GM12878 (cell line): ENCODE measurements at regions of chr1 and their contacts with region 1.

Region 1: DNA sequence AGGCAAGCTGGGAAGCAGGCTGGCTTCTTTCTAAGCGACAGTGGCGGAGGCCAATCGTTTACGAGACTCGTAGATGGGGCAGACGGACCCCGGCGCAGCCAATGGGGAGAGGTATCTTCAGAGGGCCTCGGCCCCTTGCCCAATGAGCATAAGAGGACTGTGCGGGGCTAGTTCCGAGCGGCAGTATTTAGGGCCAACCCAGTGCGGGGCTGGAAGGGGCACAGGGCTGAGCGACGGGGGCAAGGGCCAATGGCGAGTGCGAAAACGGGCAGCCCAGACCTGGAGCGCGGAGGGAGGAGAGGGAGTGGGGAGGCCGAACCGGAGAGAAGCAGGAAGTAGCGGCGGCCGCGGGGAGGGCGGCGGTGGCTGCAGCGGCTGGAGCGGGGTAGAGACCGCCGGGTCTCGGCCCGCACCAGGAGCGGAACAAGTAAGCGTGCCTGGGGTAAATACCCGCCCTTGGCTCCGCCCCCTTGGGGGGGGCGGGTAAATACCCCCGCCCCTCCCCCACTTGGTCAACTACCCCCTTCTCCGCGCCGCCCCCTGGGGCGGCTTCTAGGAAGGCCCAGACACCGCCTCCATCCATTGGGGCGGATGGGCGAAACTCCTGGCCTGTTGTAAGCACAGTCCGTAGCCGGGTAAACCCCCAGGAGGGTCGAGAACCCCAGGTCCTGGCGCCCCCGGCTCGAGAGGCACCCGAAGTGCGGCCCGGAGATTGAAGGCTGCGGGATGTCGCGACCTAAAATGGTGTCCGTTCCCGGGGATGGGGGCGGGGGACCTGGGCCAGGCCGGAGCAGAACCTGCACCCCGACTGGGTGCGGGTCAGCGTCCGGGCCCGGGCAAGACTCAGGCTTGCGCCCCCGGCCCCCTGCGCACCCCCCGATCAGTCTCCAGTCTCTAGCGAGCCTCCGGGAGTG is at the start of gene ZNF687:
- DNase-seq: peak; percentile 99
- ATAC-seq: peak; percentile 94
- H3K4me3 ChIP-seq: peak within 1 kb of the TSS; percentile 99
- H3K27ac ChIP-seq: peak within 1 kb of the TSS; percentile 100
- H3K4me1 ChIP-seq: peaks cover 21% of the 10 kb centered on the region
- H3K27me3 ChIP-seq: no peaks in the 10 kb centered on the region
- CTCF ChIP-seq: no peak
- EP300 ChIP-seq: 0 out of 4 replicates have a peak, but pooled peaks of 1 of the 2 experiments have one; percentile 4
- POLR2A ChIP-seq: peak; percentile 84
- RAD21 ChIP-seq: no peak
- polyA plus RNA-seq, gene ZNF687: 0.08 to 0.51 TPM

Region 2: GRCh38 chr1:151189638-151190445 is 92.4 kb before region 1 on chr1 and contains the start of gene VPS72:
- CTCF ChIA-PET with region 1: interaction called, 6 read pairs
- POLR2A ChIA-PET with region 1: interaction called, 16 read pairs
- RAD21 ChIA-PET with region 1: interaction called, 10 read pairs
- SMC1A ChIA-PET with region 1: interaction called, 4 read pairs
- in situ Hi-C with region 1: no loop called
- intact Hi-C with region 1: loop called (anchors 2 kb)
- DNase-seq: peak; percentile 72
- ATAC-seq: peak; percentile 92
- H3K4me3 ChIP-seq: peak within 1 kb of the TSS; percentile 76
- H3K27ac ChIP-seq: peak within 1 kb of the TSS; percentile 87
- H3K4me1 ChIP-seq: peaks cover 4% of the 10 kb centered on the region; the same call in 1 of the 2 replicates
- H3K27me3 ChIP-seq: no peaks in the 10 kb centered on the region
- CTCF ChIP-seq: no peak
- EP300 ChIP-seq: no peak; a peak in 1 of 4 replicates
- POLR2A ChIP-seq: peak; percentile 92
- RAD21 ChIP-seq: no peak
- polyA plus RNA-seq, gene VPS72: 6.7 to 9.0 TPM

Region 3: DNA sequence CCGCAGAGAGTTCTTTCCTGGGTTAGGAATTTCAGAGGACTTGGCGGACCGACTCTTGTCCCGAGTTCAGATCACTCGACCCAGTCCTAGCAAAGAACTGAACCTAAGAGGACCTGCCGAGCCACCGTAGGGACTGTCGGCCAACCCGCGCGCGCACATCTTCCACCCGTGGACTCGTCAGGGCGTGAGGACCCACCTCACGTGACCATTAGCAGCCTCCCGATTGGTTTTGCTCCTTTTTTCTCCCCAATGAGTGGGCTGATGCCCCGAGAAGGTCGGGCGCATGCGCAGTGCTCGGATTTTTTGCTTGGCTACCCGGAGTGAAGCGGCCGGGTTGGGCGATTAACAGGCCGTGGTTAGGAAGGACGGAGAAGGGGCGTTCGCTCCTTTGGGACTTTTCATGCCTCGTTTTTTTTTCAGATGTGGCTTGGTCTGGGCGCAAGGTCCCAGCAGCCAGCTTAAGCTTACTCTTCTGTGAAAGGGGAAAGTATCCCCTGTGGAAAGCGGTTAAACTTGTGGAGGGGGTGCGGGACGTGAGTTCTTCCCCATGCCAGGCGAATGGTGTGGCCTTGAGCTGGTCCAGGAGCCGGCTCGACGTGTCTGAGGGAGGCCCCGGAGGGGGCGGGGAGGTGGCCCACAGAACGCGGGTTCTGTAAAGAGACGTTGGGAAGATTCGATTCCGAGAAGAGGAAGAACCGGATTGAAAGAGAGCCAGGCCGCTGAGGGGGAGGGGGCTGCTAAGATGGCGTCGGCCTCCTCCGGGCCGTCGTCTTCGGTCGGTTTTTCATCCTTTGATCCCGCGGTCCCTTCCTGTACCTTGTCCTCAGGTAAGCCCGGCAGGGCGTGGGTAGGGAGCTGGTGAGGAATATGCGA is 83.7 kb before region 1 on chr1 and contains the start of gene PIP5K1A:
- CTCF ChIA-PET with region 1: no interaction called
- POLR2A ChIA-PET with region 1: interaction called, 3 read pairs
- RAD21 ChIA-PET with region 1: no interaction called
- SMC1A ChIA-PET with region 1: no interaction called
- in situ Hi-C with region 1: no loop called
- intact Hi-C with region 1: loop called (anchors 2 kb)
- DNase-seq: peak; percentile 93
- ATAC-seq: peak; percentile 92
- H3K4me3 ChIP-seq: peak within 1 kb of the TSS; percentile 98
- H3K27ac ChIP-seq: peak within 1 kb of the TSS; percentile 82
- H3K4me1 ChIP-seq: peaks cover 4% of the 10 kb centered on the region; the same call in 1 of the 2 replicates
- H3K27me3 ChIP-seq: no peaks in the 10 kb centered on the region
- CTCF ChIP-seq: no peak
- EP300 ChIP-seq: peak in 1 of 2 experiments; percentile 36; a peak in 1 of 4 replicates
- POLR2A ChIP-seq: peak; percentile 86
- RAD21 ChIP-seq: no peak
- polyA plus RNA-seq, gene PIP5K1A: 4.5 to 5.8 TPM

Region 4: GRCh38 chr1:151254217-151255213 is 27.7 kb before region 1 on chr1 and contains the start of gene PSMD4:
- CTCF ChIA-PET with region 1: interaction called, 13 read pairs
- POLR2A ChIA-PET with region 1: interaction called, 32 read pairs
- RAD21 ChIA-PET with region 1: interaction called, 10 read pairs
- SMC1A ChIA-PET with region 1: interaction called, 5 read pairs
- in situ Hi-C with region 1: no loop called
- intact Hi-C with region 1: loop called (anchors 1 kb)
- DNase-seq: peak; percentile 96
- ATAC-seq: peak; percentile 95
- H3K4me3 ChIP-seq: peak within 1 kb of the TSS; percentile 81
- H3K27ac ChIP-seq: peak within 1 kb of the TSS; percentile 87
- H3K4me1 ChIP-seq: peaks cover 2% of the 10 kb centered on the region; the same call in 1 of the 2 replicates
- H3K27me3 ChIP-seq: no peaks in the 10 kb centered on the region
- CTCF ChIP-seq: no peak
- EP300 ChIP-seq: no peak
- POLR2A ChIP-seq: peak; percentile 94
- RAD21 ChIP-seq: no peak
- polyA plus RNA-seq, gene PSMD4: 129 to 190 TPM

Region 5: GRCh38 chr1:151327223-151327902 is 45.1 kb after region 1 on chr1 and contains the start of gene PI4KB:
- CTCF ChIA-PET with region 1: interaction called, 5 read pairs
- POLR2A ChIA-PET with region 1: interaction called, 17 read pairs
- RAD21 ChIA-PET with region 1: interaction called, 14 read pairs
- SMC1A ChIA-PET with region 1: interaction called, 6 read pairs
- in situ Hi-C with region 1: no loop called
- intact Hi-C with region 1: loop called (anchors 2 kb)
- DNase-seq: peak; percentile 83
- ATAC-seq: peak; percentile 93
- H3K4me3 ChIP-seq: peak within 1 kb of the TSS; percentile 74
- H3K27ac ChIP-seq: peak within 1 kb of the TSS; percentile 95
- H3K4me1 ChIP-seq: peaks cover 9% of the 10 kb centered on the region; the same call in 1 of the 2 replicates
- H3K27me3 ChIP-seq: no peaks in the 10 kb centered on the region
- CTCF ChIP-seq: no peak
- EP300 ChIP-seq: no peak
- POLR2A ChIP-seq: peak; percentile 83
- RAD21 ChIP-seq: no peak
- polyA plus RNA-seq, gene PI4KB: 3.3 to 7.2 TPM

Region 6: DNA sequence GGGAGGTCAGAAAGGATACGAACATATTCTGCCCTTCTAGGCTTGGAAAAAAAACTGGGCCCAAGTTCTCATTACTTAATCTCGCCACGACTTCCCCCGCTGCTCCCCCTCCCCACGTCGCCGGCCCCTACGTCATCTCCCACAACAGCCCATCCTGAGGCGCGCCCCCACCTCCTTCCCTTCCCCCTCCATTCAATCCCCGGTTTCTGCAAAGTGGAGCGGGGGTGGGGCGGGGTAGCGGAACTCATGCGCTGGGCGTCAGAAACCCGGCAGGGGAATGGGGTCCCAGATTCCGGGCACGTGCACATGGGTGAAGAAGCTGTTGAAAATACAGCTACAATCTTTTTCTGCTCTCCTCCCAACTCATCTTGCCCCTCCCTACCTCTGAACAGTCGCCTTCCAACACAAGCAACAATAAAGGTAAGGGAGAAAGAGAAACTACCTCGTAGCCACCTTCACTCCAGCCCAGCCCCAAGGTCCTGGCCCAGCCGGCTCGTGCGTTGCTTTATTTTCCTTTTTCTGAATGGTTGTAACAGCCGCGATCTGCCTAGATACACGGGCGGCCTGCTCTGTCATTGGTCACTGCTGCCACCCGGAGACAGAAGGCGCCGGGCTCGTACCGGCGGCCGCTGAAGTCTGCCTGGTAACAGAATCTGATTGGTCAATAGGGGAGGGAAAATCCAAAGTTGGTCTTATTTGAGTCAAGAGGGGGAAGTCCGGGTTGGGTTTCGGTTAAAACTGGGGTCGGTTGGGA is 64.7 kb after region 1 on chr1 and contains the start of gene RFX5:
- CTCF ChIA-PET with region 1: interaction called, 14 read pairs
- POLR2A ChIA-PET with region 1: interaction called, 5 read pairs
- RAD21 ChIA-PET with region 1: interaction called, 9 read pairs
- SMC1A ChIA-PET with region 1: no interaction called
- in situ Hi-C with region 1: no loop called
- intact Hi-C with region 1: loop called (anchors 1 kb)
- DNase-seq: peak; percentile 98
- ATAC-seq: peak; percentile 97
- H3K4me3 ChIP-seq: peak within 1 kb of the TSS; percentile 81
- H3K27ac ChIP-seq: peak within 1 kb of the TSS; percentile 99
- H3K4me1 ChIP-seq: peaks cover 7% of the 10 kb centered on the region
- H3K27me3 ChIP-seq: no peaks in the 10 kb centered on the region
- CTCF ChIP-seq: no peak
- EP300 ChIP-seq: peak; percentile 75 to 93
- POLR2A ChIP-seq: peak; percentile 67
- RAD21 ChIP-seq: no peak
- polyA plus RNA-seq, gene RFX5: 14.1 to 18.4 TPM

Region 7: DNA sequence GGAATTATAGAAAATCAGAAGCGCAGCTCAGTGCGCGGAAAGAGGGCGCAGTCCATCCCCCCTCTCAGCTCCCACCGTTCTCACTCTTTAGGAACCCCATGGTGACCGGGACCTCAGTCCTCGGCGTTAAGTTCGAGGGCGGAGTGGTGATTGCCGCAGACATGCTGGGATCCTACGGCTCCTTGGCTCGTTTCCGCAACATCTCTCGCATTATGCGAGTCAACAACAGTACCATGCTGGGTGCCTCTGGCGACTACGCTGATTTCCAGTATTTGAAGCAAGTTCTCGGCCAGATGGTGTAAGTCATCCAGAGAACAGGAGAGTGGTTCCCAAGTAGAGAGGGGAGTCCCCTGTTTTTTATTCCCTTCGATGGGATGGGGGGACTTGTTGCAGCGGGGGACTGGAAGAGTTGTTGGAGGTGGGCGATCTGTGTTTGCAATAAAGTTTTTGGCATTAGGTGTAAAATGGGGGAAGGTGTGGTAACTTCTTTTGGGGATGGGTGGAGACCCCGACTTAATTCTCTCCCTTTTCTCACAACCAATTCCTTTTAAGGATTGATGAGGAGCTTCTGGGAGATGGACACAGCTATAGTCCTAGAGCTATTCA is 117.8 kb after region 1 on chr1:
- CTCF ChIA-PET with region 1: interaction called, 5 read pairs
- POLR2A ChIA-PET with region 1: interaction called, 6 read pairs
- RAD21 ChIA-PET with region 1: interaction called, 3 read pairs
- SMC1A ChIA-PET with region 1: interaction called, 3 read pairs
- in situ Hi-C with region 1: no loop called
- intact Hi-C with region 1: loop called (anchors 1 kb)
- DNase-seq: no peak
- ATAC-seq: peak; percentile 42
- H3K4me3 ChIP-seq: peak overlapping the region; percentile 88
- H3K27ac ChIP-seq: peak overlapping the region; percentile 83
- H3K4me1 ChIP-seq: peaks cover 9% of the 10 kb centered on the region
- H3K27me3 ChIP-seq: no peaks in the 10 kb centered on the region
- CTCF ChIP-seq: no peak
- EP300 ChIP-seq: no peak
- POLR2A ChIP-seq: no peak; the same call in 1 of the 2 replicates
- RAD21 ChIP-seq: no peak